Adrenal gland (tissue), 19 donors: ENCODE measurements at regions of chr3 and their contacts with region 1.

Region 1: DNA sequence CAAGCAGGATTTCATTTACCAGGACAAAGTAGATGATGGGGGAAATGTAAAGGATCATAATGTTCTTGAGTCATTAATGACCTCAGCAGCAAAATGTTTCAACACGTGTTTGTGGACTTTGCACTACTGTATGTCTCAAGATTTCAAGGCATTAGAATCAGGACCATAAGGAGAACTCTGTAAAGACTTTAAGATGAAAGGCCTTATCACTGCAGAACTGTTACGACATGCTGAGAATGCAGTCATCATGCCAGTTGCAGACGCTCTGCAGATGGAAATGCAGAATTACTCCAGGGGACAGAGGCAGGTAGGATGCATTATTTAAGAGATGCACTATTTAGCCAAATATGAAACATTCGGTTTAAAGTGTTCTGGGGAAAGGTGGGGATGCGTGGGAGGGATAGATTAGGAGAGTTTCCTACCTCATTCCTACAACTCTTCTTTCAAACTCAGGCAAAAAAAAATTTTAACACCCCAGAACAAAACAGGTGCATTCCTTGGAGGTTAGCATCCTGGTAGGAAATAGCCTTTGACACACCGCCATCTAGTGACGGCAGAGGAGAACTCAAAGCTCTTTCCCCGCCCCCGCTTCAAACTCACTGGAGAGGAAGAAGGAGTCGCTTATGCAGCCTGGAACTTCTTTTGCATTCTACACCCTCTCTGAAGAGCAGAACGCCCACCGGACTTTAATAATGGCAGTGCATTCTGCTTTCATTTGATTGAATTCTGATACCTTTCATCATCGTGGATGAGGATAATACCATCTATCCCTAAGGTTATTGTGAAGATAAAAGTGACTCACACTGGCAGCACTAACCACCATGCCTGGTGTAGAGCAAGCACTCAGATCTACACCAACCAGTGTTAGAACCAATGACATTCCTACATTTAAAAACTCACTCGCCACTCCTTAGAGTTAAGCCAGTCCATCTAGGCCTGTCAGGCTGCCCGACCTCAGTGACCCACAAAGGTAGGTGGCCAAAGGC is 43.1 kb upstream of the TOPAZ1 start:
- DNase-seq: peak; percentile 62 to 84 (median 74)
- H3K4me3 ChIP-seq: no peak overlapping the region
- H3K27ac ChIP-seq: no peak overlapping the region
- H3K4me1 ChIP-seq: no peaks in the 10 kb centered on the region
- H3K27me3 ChIP-seq: no peaks in the 10 kb centered on the region
- CTCF ChIP-seq: peak; percentile 57 to 82 (median 76)
- POLR2A ChIP-seq: no peak

Region 2: GRCh38 chr3:43540624-43541023 is 658.0 kb before region 1 on chr3:
- intact Hi-C with region 1: loop called (anchors 5 to 10 kb)
- DNase-seq: no peak
- H3K4me3 ChIP-seq: no peak overlapping the region
- H3K27ac ChIP-seq: no peak overlapping the region
- H3K4me1 ChIP-seq: no peaks in the 10 kb centered on the region
- H3K27me3 ChIP-seq: no peaks in the 10 kb centered on the region
- CTCF ChIP-seq: no peak
- POLR2A ChIP-seq: no peak

Region 3: DNA sequence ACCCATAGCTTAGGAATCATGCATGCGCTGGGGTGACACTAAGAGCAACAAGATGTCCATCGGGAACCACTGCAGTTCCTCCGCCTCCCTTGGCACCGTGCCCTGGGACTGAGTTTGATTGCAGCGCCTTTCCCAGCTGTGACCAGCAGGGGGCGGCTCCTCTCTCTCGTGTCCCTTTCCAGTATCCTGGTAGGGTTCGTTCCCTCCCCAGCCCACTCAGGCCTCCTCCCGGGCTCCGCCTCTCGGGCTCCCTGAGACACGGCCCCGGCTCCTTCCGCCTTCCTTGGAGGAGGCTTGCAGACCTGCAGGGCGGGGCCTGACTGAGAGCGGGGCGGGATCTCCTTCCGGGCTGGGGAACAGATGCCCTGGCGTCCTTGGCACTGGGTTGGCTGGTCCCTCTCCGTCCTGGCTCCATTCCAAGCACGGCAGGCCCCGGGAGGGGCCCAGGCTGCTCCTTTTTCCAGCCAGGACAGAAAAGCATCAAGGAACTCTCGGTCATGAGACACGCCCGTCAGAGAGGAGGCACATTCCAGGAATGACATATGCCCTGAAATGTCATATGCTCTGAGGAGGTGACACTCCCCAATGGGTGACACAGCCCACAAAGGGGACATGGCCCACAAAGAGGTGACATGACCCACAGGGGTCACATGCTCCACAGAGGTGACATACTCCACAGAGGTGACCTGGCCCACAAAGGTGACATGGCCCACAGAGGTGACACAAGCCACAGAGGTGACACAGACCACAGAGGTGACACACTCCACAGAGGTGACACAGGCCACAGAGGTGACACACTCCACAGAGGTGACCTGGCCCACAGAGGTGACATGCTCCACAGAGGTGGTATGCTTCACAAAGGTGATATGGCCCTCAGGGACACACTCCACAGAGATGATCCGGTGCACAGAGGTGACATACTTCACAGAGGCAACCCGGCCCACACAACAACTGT is 428.8 kb before region 1 on chr3:
- intact Hi-C with region 1: loop called in 1 of 2 experiments (anchors 10 kb)
- DNase-seq: peak; percentile 95 to 99 (median 98)
- H3K4me3 ChIP-seq: peak overlapping the region in 1 of 4 donors; percentile 39
- H3K27ac ChIP-seq: peak overlapping the region; percentile 86 to 98 (median 94)
- H3K4me1 ChIP-seq: peaks cover 17 to 34% of the 10 kb centered on the region in 2 donors
- H3K27me3 ChIP-seq: no peaks in the 10 kb centered on the region
- CTCF ChIP-seq: peak; percentile 90 to 96 (median 92)
- POLR2A ChIP-seq: peak in 1 of 2 donors; percentile 13